Activated T-helper 1 cell treated with anti-CD3 and anti-CD28 coated beads, Interleukin-12 subunit alpha, Interleukin-12 subunit beta, Interleukin-2, Interleukin-4 antibody, amounts not matched to agents 30 ng/mL and 10 ng/mL and 1 ng/mL, durations not matched to agents 14 hours and 24 hours and 36 hours (primary cell): ENCODE measurements at regions of chr21 and their contacts with region 1.

Region 1: GRCh38 chr21:43893536-43894205 is 28.6 kb downstream of the AGPAT3 start:
- DNase-seq: peak; percentile 12
- H3K4me3 Mint-ChIP-seq: peak overlapping the region; percentile 24
- H3K27ac Mint-ChIP-seq: peak overlapping the region; percentile 64
- H3K4me1 Mint-ChIP-seq: peaks cover 37% of the 10 kb centered on the region
- H3K27me3 Mint-ChIP-seq: no peaks in the 10 kb centered on the region

Region 2: GRCh38 chr21:43842742-43843141 is 50.9 kb before region 1 on chr21:
- intact Hi-C with region 1: loop called (anchors 2 kb)
- DNase-seq: no peak
- H3K4me3 Mint-ChIP-seq: peak overlapping the region; percentile 25
- H3K27ac Mint-ChIP-seq: peak overlapping the region; percentile 65
- H3K4me1 Mint-ChIP-seq: peaks cover 14% of the 10 kb centered on the region
- H3K27me3 Mint-ChIP-seq: peaks cover 12% of the 10 kb centered on the region

Region 3: GRCh38 chr21:43854773-43855633 is 38.7 kb before region 1 on chr21:
- intact Hi-C with region 1: loop called (anchors 1 kb)
- DNase-seq: peak; percentile 68
- H3K4me3 Mint-ChIP-seq: peak overlapping the region; percentile 56
- H3K27ac Mint-ChIP-seq: peak overlapping the region; percentile 86
- H3K4me1 Mint-ChIP-seq: peaks cover 31% of the 10 kb centered on the region
- H3K27me3 Mint-ChIP-seq: no peaks in the 10 kb centered on the region

Region 4: DNA sequence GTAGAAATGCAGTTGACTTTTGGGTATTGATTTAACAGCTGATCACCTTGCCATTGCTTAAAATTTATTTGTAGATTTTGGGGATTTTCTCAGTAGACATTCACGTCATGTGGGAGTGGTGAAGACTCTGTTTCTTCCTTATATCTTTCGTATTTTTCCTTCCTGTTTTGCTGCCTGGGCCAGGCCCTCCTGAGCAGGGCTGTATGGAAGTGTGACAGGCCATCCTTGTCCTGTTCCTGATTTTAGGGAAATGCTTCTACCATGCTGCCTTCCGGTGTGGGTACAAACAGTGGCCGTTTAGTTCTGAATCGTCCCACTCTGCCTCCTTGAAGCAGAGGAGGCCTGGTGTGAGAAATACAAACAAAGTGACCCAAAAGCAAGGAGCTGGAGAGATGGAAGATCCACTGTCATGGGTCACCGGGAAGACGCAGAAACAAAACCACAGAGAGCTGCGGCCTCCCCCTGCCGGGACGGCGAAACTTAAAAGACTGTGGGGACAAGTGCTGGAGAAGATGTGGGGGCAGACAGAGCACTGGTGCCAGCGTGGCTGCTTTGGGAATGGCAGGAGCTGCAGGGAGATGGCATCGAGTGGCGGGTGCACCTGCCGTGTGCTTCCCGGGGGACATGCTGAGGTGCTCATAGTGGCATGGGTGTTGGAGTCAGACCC is 21.0 kb before region 1 on chr21:
- intact Hi-C with region 1: loop called (anchors 1 kb)
- DNase-seq: no peak
- H3K4me3 Mint-ChIP-seq: no peak overlapping the region
- H3K27ac Mint-ChIP-seq: peak overlapping the region; percentile 57
- H3K4me1 Mint-ChIP-seq: peaks cover 63% of the 10 kb centered on the region
- H3K27me3 Mint-ChIP-seq: no peaks in the 10 kb centered on the region

Region 5: DNA sequence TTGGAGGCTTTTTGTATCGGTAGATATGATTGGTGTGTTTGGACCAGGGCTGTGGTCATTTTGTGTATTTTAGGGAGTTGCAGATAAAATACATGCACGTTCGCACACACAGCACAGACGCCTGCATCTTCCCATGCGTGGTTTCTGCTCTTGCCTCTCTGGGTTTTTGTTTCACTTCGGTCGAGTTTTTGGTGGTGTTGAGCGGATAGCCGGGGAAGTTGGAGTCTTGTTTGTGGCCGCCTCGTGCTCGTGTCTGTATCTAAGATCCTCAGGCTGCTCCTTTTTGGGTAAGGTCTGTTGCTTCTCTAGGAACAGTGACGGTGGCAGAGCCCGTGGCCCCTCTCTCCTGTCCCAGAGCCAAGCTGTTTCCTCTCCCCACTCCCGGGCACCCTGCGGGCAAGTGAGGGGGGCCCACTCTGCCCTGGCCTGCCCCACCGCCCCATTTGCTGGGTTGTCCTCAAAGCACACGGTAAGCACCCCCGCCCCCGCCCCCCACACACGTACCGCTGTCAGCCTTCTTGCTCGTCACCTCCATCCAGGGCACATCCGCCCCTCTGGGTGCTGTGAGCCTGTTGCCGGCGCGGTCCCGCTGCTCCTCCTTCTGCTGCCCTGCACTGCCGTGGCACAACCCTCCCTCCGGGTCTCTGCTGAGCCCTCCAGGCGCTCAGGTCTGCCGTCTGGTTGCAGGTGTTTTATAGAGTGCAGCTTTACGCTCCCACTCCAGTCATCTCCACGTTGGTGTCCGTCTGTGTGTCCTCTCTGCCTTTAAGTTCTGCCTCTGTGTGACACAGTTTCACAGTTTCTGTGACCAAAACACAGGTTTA is 23.2 kb after region 1 on chr21:
- intact Hi-C with region 1: loop called (anchors 2 kb)
- DNase-seq: peak; percentile 53
- H3K4me3 Mint-ChIP-seq: peak overlapping the region; percentile 81
- H3K27ac Mint-ChIP-seq: peak overlapping the region; percentile 81
- H3K4me1 Mint-ChIP-seq: peaks cover 66% of the 10 kb centered on the region
- H3K27me3 Mint-ChIP-seq: no peaks in the 10 kb centered on the region

Region 6: GRCh38 chr21:43938751-43939442 is 45.2 kb after region 1 on chr21:
- intact Hi-C with region 1: loop called (anchors 2 kb)
- DNase-seq: peak; percentile 82
- H3K4me3 Mint-ChIP-seq: peak overlapping the region; percentile 76
- H3K27ac Mint-ChIP-seq: peak overlapping the region; percentile 61
- H3K4me1 Mint-ChIP-seq: peaks cover 20% of the 10 kb centered on the region
- H3K27me3 Mint-ChIP-seq: no peaks in the 10 kb centered on the region